Activated B cell treated with CpG ODN at 0.5 μM for 24 hours (primary cell): ENCODE measurements at regions of chr3 and their contacts with region 1.

Region 1: DNA sequence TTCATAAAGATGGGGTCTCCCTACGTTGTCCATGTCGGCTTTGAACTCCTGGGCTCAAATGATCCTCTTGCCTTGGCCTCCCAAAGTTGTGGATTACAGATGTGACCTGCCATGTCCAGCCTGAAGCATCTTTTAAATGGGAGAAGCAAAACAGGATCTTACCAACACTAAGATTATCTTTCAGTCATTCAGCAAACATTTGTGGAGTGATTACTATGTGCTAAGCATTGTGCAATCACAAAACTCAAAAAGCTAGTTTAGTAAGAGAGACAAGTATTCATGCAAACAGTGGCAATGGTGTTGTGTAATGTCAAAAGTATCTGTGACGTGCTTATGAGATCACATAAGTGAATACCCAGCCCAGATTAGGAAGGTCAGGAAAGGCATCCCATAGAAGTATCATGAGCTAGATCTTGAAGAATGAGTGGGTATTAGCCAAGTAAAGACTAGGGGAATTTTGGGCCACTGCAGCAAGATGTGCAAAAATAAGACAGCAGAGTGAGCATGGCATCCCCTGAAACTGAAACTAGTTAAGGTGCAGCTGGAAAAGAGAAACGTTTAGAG is 32.0 kb downstream of the SEC62 start:
- DNase-seq: no peak
- ATAC-seq: peak; percentile 25
- H3K4me3 Mint-ChIP-seq: peak overlapping the region; percentile 11
- H3K27ac Mint-ChIP-seq: peak overlapping the region; percentile 70
- H3K4me1 Mint-ChIP-seq: peaks cover 51% of the 10 kb centered on the region
- H3K27me3 Mint-ChIP-seq: no peaks in the 10 kb centered on the region
- CTCF ChIP-seq: no peak

Region 2: DNA sequence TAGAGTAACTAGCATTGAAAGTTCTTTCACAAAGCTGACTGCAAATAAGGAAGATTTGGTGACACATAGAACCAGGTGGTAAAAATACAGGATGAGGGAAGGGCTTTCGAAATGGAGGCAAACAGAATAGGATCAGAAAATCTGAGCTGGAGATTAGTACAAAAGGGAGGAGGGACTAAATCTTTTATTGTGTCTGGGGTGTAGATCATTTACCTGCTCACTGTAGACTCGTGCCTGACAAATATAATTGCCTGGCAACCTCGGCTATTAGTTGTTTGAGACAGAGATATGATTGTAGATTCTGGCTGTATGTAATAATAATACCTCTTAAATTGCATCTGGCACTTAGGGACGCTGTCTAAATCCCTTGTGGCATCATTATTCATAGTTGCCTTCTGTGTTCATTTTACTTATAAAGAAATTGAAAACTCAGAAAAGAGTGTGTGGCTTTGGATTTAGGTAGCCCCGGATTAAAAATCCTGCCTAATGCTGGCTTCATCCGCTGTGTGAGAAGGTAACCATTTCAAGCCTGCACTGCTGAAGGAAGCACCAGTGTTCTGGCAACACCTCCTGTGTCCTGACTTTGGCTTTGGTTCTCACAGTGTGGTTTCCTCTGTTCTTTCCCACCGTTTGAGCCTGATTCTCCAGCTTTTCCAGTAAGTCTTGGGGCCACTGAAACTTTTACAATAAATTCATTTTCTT is 14.2 kb after region 1 on chr3:
- CTCF ChIA-PET with region 1: no interaction called
- POLR2A ChIA-PET with region 1: no interaction called
- intact Hi-C with region 1: loop called (anchors 2 kb)
- DNase-seq: no peak
- ATAC-seq: no peak
- H3K4me3 Mint-ChIP-seq: no peak overlapping the region
- H3K27ac Mint-ChIP-seq: no peak overlapping the region
- H3K4me1 Mint-ChIP-seq: peaks cover 9% of the 10 kb centered on the region
- H3K27me3 Mint-ChIP-seq: no peaks in the 10 kb centered on the region
- CTCF ChIP-seq: no peak

Region 3: GRCh38 chr3:170054204-170054603 is 55.6 kb after region 1 on chr3:
- CTCF ChIA-PET with region 1: no interaction called
- POLR2A ChIA-PET with region 1: no interaction called
- intact Hi-C with region 1: no loop called
- DNase-seq: no peak
- ATAC-seq: no peak
- H3K4me3 Mint-ChIP-seq: no peak overlapping the region
- H3K27ac Mint-ChIP-seq: peak overlapping the region; percentile 27
- H3K4me1 Mint-ChIP-seq: peaks cover 60% of the 10 kb centered on the region
- H3K27me3 Mint-ChIP-seq: no peaks in the 10 kb centered on the region
- CTCF ChIP-seq: no peak